HepG2 (cell line): ENCODE measurements at regions of chr3 and their contacts with region 1.

Region 1: DNA sequence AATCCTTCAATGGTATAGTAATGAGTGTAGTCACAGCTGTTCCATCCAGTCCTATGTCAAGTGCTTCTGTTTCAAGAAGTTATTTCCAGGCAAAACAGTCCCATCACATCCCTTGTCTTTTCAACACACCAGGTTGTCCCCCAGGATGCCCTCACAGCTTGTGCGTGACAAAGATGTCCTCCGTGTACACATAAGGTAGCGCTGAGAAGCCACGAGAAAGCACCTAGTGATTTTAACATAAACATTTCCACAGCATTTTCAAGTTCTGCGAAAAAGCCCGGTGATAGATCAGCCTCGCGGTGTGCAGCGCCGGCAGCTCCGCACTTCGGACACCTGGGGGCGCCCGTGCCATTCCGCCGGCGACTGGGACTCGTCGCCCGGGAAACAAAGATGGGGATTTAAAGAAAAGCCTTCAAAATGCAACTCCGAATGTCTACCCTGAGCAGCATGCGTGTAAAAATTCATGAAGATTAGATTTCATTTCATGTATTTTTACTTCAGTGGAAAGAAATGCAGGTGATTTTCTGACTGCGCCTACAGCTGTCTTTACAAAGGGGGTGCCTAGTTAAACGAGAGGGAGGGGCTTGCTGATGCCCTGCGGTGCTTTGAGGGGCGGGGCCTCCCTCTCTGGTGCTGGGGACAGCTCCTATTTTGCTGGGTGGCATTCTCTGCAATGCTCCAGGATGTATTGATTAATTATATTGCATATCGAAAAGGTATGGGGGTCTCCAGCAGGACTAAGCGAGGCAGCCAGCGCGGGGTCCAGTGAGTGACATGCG is 49.9 kb downstream of the KY start:
- DNase-seq: peak; percentile 23
- ATAC-seq: peak; percentile 85
- H3K4me3 ChIP-seq: no peak overlapping the region
- H3K27ac ChIP-seq: no peak overlapping the region
- H3K4me1 ChIP-seq: no peaks in the 10 kb centered on the region
- H3K27me3 ChIP-seq: peaks cover 1 to 42% of the 10 kb centered on the region in 2 experiments; a peak in 2 of 5 replicates
- CTCF ChIP-seq: peak; percentile 85
- EP300 ChIP-seq: no peak
- POLR2A ChIP-seq: no peak
- RAD21 ChIP-seq: peak; percentile 82

Region 2: DNA sequence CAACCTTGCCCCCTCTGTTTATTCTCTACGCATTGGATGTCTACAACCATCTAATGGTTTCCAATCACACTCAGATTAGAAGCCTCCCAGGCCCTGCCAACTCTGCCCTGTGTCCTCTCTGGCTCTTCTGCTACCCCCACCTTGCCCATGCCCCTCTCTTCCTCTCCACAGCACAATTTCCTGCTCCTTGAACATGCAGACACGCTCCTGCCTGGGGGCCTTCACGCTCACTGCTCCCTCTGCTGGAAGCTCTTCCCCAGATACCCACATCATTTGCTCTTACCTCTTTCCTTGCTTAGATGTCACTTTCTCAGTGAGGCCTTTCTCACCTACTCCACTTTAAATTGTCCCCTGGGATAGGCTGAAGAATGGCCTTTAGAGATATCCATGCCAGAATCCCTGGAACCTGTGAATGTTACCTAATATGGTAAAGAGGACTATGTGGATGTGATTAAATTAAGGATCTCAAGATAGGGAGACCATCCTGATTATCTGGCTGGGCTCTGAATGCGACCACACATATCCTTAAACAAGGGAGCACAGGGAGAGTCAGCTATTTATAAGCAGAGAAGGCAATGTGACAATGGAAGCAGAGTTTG is 40.1 kb after region 1 on chr3:
- CTCF ChIA-PET with region 1: interaction called, 14 read pairs
- POLR2A ChIA-PET with region 1: no interaction called
- in situ Hi-C with region 1: loop called (anchors 5 kb)
- intact Hi-C with region 1: loop called (anchors 1 kb)
- DNase-seq: peak; percentile 26
- ATAC-seq: peak; percentile 83
- H3K4me3 ChIP-seq: no peak overlapping the region
- H3K27ac ChIP-seq: no peak overlapping the region
- H3K4me1 ChIP-seq: peaks cover 8% of the 10 kb centered on the region
- H3K27me3 ChIP-seq: peaks cover 0 to 4% of the 10 kb centered on the region in 2 experiments; a peak in 2 of 5 replicates
- CTCF ChIP-seq: peak; percentile 57
- EP300 ChIP-seq: no peak
- POLR2A ChIP-seq: no peak
- RAD21 ChIP-seq: no peak

Region 3: GRCh38 chr3:134754768-134755559 is 154.1 kb after region 1 on chr3:
- CTCF ChIA-PET with region 1: no interaction called
- POLR2A ChIA-PET with region 1: no interaction called
- in situ Hi-C with region 1: loop called (anchors 5 kb)
- intact Hi-C with region 1: loop called (anchors 2 kb)
- DNase-seq: peak; percentile 29
- ATAC-seq: peak; percentile 97
- H3K4me3 ChIP-seq: no peak overlapping the region
- H3K27ac ChIP-seq: no peak overlapping the region
- H3K4me1 ChIP-seq: no peaks in the 10 kb centered on the region
- H3K27me3 ChIP-seq: no peaks in the 10 kb centered on the region; a peak in 1 of 5 replicates
- CTCF ChIP-seq: peak; percentile 70
- EP300 ChIP-seq: no peak
- POLR2A ChIP-seq: no peak
- RAD21 ChIP-seq: 0 out of 2 replicates have a peak, but pooled peaks have one; percentile 17

Region 4: DNA sequence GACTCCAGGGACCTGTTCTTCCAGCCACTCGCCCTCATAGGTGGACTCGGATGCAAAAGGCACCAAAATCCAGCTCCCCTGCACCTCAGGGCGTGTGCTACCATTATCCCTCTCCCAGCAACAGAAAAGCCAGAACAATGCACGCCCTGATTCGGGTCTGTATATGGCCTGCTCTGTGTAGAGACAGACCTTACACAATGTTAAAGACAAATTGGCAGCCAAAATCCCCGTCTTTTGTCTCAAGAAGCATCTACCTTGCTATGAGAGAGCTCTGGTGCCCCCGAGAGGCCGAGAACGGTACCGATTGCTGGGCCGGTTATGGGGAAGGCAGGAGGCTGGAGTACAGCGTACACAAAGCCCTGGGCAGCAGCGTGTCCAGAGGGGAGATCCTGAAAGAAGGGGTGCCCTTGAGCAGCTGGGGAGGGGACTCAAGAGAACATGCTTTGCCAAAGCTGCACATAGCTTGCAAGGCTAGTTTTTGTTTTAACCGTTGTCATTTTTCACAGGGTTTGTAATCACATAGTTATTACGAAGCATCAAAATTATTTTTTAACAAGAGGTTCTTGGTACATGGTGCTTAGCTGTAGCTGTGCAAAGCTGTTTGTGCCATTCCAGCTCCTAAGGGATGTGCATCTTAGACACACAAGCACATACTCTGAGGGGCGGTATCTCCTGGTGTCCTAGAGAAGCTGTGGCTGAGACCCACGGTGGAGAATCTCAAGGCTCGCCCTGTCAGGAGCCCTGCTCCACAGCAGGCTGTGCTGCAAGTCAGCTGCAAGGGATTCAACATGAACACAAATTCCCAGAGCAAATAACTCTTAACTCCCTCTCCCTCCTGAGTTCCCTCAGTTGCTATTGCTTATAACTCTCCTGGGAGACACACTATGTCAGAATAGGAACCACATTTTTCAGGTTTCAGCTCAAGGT is 903.1 kb after region 1 on chr3:
- CTCF ChIA-PET with region 1: no interaction called
- POLR2A ChIA-PET with region 1: no interaction called
- in situ Hi-C with region 1: loop called (anchors 25 kb)
- intact Hi-C with region 1: no loop called
- DNase-seq: peak; percentile 20
- ATAC-seq: peak; percentile 97
- H3K4me3 ChIP-seq: no peak overlapping the region
- H3K27ac ChIP-seq: no peak overlapping the region
- H3K4me1 ChIP-seq: no peaks in the 10 kb centered on the region
- H3K27me3 ChIP-seq: peaks cover 0 to 5% of the 10 kb centered on the region in 2 experiments; a peak in 1 of 5 replicates
- CTCF ChIP-seq: peak; percentile 78
- EP300 ChIP-seq: no peak
- POLR2A ChIP-seq: no peak
- RAD21 ChIP-seq: 0 out of 2 replicates have a peak, but pooled peaks have one; percentile 23

Region 5: DNA sequence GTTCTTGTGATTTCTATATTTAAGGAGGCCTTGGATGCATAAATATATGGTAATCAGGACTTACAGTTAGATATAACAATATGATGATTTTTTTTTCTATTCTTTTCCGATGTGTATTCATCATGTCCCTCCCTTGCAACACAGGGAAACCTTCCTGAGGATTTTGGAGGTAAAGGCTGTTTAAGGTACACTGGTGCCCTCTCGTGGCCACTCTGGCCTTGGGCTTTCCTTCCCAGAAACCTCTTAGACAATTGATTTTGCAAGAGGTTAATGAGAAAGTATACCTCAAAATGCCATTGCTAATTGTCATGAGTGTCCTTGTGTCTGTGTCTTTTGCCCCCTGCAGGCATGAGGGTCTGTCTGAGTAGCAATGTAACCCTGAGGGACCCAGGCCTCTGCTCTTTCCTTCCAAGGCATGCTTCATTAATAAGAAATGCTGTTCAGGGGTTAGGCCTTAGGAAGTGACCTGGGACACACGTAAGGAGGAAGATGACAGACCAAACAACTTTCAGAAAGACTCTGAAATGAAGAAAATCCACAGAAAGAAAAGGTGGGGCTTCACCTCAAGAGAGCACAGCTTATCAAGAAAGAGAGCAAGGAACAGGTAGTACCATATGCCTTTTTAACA is 1294.3 kb after region 1 on chr3:
- CTCF ChIA-PET with region 1: interaction called, 4 read pairs
- POLR2A ChIA-PET with region 1: no interaction called
- in situ Hi-C with region 1: loop called (anchors 25 kb)
- intact Hi-C with region 1: loop called (anchors 5 kb)
- DNase-seq: peak; percentile 49
- ATAC-seq: peak; percentile 67
- H3K4me3 ChIP-seq: no peak overlapping the region
- H3K27ac ChIP-seq: no peak overlapping the region
- H3K4me1 ChIP-seq: no peaks in the 10 kb centered on the region
- H3K27me3 ChIP-seq: no peaks in the 10 kb centered on the region; a peak in 1 of 5 replicates
- CTCF ChIP-seq: peak; percentile 83
- EP300 ChIP-seq: no peak
- POLR2A ChIP-seq: no peak
- RAD21 ChIP-seq: peak; percentile 51